Heart left ventricle (tissue), 16 donors: ENCODE measurements at regions of chr1 and their contacts with region 1.

Region 1: GRCh38 chr1:207404849-207405525 is 49.1 kb upstream of the CR2 start:
- DNase-seq: no peak
- ATAC-seq: peak in 3 of 4 donors; percentile 57 to 82 (median 70)
- H3K4me3 ChIP-seq: no peak overlapping the region
- H3K27ac ChIP-seq: no peak overlapping the region
- H3K4me1 ChIP-seq: peaks cover 0 to 24% (median 0%) of the 10 kb centered on the region in 12 donors
- H3K27me3 ChIP-seq: peaks cover 0 to 7% (median 0%) of the 10 kb centered on the region in 9 donors
- CTCF ChIP-seq: peak; percentile 64 to 88 (median 78)
- POLR2A ChIP-seq: no peak

Region 2: GRCh38 chr1:206075786-206076755 is 1328.9 kb before region 1 on chr1:
- intact Hi-C with region 1: no loop called
- DNase-seq: no peak
- ATAC-seq: no peak
- H3K4me3 ChIP-seq: no peak overlapping the region
- H3K27ac ChIP-seq: no peak overlapping the region
- H3K4me1 ChIP-seq: no peaks in the 10 kb centered on the region
- H3K27me3 ChIP-seq: peaks cover 0 to 4% (median 0%) of the 10 kb centered on the region in 9 donors
- CTCF ChIP-seq: no peak
- POLR2A ChIP-seq: no peak

Region 3: GRCh38 chr1:207084701-207085180 is 320.2 kb before region 1 on chr1:
- intact Hi-C with region 1: loop called (anchors 1 to 5 kb)
- DNase-seq: peak in 3 of 5 donors; percentile 37 to 42 (median 38)
- ATAC-seq: peak in 3 of 4 donors; percentile 69 to 76 (median 72)
- H3K4me3 ChIP-seq: no peak overlapping the region
- H3K27ac ChIP-seq: no peak overlapping the region
- H3K4me1 ChIP-seq: peaks cover 0 to 13% (median 0%) of the 10 kb centered on the region in 12 donors
- H3K27me3 ChIP-seq: no peaks in the 10 kb centered on the region
- CTCF ChIP-seq: peak; percentile 41 to 72 (median 62)
- POLR2A ChIP-seq: no peak

Region 4: GRCh38 chr1:207174913-207175312 is 230.1 kb before region 1 on chr1:
- intact Hi-C with region 1: loop called (anchors 5 to 10 kb)
- DNase-seq: no peak
- ATAC-seq: no peak
- H3K4me3 ChIP-seq: no peak overlapping the region
- H3K27ac ChIP-seq: no peak overlapping the region
- H3K4me1 ChIP-seq: peaks cover 0 to 9% (median 0%) of the 10 kb centered on the region in 12 donors
- H3K27me3 ChIP-seq: no peaks in the 10 kb centered on the region
- CTCF ChIP-seq: no peak
- POLR2A ChIP-seq: no peak

Region 5: GRCh38 chr1:207181838-207182237 is 223.1 kb before region 1 on chr1:
- intact Hi-C with region 1: loop called (anchors 5 to 10 kb)
- DNase-seq: no peak
- ATAC-seq: no peak
- H3K4me3 ChIP-seq: no peak overlapping the region
- H3K27ac ChIP-seq: no peak overlapping the region
- H3K4me1 ChIP-seq: no peaks in the 10 kb centered on the region
- H3K27me3 ChIP-seq: no peaks in the 10 kb centered on the region
- CTCF ChIP-seq: peak in 8 of 12 donors; percentile 6 to 46 (median 26)
- POLR2A ChIP-seq: no peak

Region 6: GRCh38 chr1:207259391-207259790 is 145.6 kb before region 1 on chr1:
- intact Hi-C with region 1: loop called in 5 of 10 experiments (anchors 2 to 10 kb)
- DNase-seq: no peak
- ATAC-seq: peak in 2 of 4 donors; percentile 36 to 56
- H3K4me3 ChIP-seq: no peak overlapping the region
- H3K27ac ChIP-seq: no peak overlapping the region
- H3K4me1 ChIP-seq: no peaks in the 10 kb centered on the region
- H3K27me3 ChIP-seq: no peaks in the 10 kb centered on the region
- CTCF ChIP-seq: peak in 7 of 12 donors; percentile 23 to 54 (median 39)
- POLR2A ChIP-seq: no peak

Region 7: GRCh38 chr1:207321079-207321789 is 83.8 kb before region 1 on chr1 and contains the start of gene CD55:
- intact Hi-C with region 1: loop called in 1 of 10 experiments (anchors 10 kb)
- DNase-seq: peak; percentile 96 to 97 (median 96)
- ATAC-seq: peak; percentile 97 to 99 (median 98)
- H3K4me3 ChIP-seq: peak within 1 kb of the TSS; percentile 45 to 97 (median 87)
- H3K27ac ChIP-seq: peak within 1 kb of the TSS; percentile 89 to 98 (median 95)
- H3K4me1 ChIP-seq: peaks cover 0 to 64% (median 12%) of the 10 kb centered on the region in 12 donors
- H3K27me3 ChIP-seq: no peaks in the 10 kb centered on the region
- CTCF ChIP-seq: peak in 11 of 12 donors; percentile 4 to 45 (median 23)
- POLR2A ChIP-seq: peak; percentile 16 to 90
- total RNA-seq, gene CD55: 68.8 to 149 (median 91.2) TPM

Region 8: GRCh38 chr1:207355060-207355459 is 49.9 kb before region 1 on chr1:
- intact Hi-C with region 1: no loop called
- DNase-seq: no peak
- ATAC-seq: no peak
- H3K4me3 ChIP-seq: no peak overlapping the region
- H3K27ac ChIP-seq: no peak overlapping the region
- H3K4me1 ChIP-seq: peaks cover 0 to 8% (median 0%) of the 10 kb centered on the region in 12 donors
- H3K27me3 ChIP-seq: no peaks in the 10 kb centered on the region
- CTCF ChIP-seq: no peak
- POLR2A ChIP-seq: no peak

Region 9: GRCh38 chr1:208149776-208150514 is 745.0 kb after region 1 on chr1:
- intact Hi-C with region 1: no loop called
- DNase-seq: peak in 4 of 5 donors; percentile 40 to 72 (median 41)
- ATAC-seq: peak; percentile 8 to 57 (median 40)
- H3K4me3 ChIP-seq: no peak overlapping the region
- H3K27ac ChIP-seq: peak overlapping the region in 3 of 12 donors; percentile 1 to 67 (median 14)
- H3K4me1 ChIP-seq: peaks cover 0 to 56% (median 38%) of the 10 kb centered on the region in 12 donors
- H3K27me3 ChIP-seq: no peaks in the 10 kb centered on the region
- CTCF ChIP-seq: no peak
- POLR2A ChIP-seq: no peak